Thyroid gland (tissue), 4 donors: ENCODE measurements at regions of chr7 and their contacts with region 1.

Region 1: DNA sequence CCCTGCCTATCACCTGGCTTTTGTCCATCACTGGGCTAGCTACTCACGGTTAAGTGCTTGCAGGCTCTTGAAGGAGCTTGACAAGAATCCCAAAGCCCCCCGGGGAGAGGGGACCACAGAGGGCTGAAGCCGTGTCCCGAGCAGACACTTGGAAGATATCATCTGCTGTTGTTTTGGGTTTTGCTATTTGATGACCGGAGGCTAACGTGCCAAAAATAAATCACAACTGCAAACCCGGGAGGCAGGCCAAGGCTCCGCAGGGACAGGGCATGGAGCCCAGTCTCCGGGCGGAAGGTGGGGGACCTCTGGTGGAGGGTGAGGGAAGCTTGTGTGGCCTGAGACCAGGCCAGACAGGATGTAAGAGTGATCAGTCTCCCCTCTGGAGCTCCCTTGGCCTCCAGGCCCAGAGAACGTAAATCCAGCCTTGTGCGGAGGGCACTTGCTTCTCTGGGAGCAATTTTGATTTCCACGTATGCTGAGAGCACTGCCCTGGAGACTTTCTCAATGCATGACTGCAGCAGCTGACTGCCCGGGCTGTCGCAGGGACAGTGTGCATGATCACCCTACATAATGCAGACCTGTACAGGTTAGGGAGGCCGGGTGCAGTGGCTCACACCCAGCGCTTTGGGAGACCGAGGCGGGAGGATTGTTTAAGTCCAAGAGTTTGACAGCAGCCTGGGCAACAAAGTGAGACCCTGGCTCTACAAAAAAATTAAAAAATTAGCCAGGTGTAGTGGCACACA is at the start of gene PHKG1:
- DNase-seq: peak; percentile 80 to 89
- H3K4me3 ChIP-seq: no peak within 1 kb of the TSS
- H3K27ac ChIP-seq: peak within 1 kb of the TSS; percentile 23 to 42 (median 34)
- H3K4me1 ChIP-seq: peaks cover 17 to 26% of the 10 kb centered on the region in 2 donors
- H3K27me3 ChIP-seq: no peaks in the 10 kb centered on the region
- CTCF ChIP-seq: peak in 3 of 6 experiments; percentile 25 to 68 (median 49)
- POLR2A ChIP-seq: no peak
- total RNA-seq, gene PHKG1: 0.78 to 3.5 (median 1.8) TPM

Region 2: GRCh38 chr7:55641273-55641691 is 451.7 kb before region 1 on chr7:
- intact Hi-C with region 1: loop called (anchors 10 kb)
- DNase-seq: peak; percentile 23 to 25
- H3K4me3 ChIP-seq: no peak overlapping the region
- H3K27ac ChIP-seq: no peak overlapping the region
- H3K4me1 ChIP-seq: no peaks in the 10 kb centered on the region
- H3K27me3 ChIP-seq: no peaks in the 10 kb centered on the region
- CTCF ChIP-seq: peak in 5 of 6 experiments; percentile 34 to 94 (median 80)
- POLR2A ChIP-seq: no peak

Region 3: GRCh38 chr7:56028942-56029630 is 63.9 kb before region 1 on chr7:
- intact Hi-C with region 1: no loop called
- DNase-seq: no peak
- H3K4me3 ChIP-seq: no peak overlapping the region
- H3K27ac ChIP-seq: no peak overlapping the region
- H3K4me1 ChIP-seq: no peaks in the 10 kb centered on the region
- H3K27me3 ChIP-seq: no peaks in the 10 kb centered on the region
- CTCF ChIP-seq: no peak
- POLR2A ChIP-seq: no peak